ENCODE measurements at regions of chr15 and their contacts with region 1.

Region 1: DNA sequence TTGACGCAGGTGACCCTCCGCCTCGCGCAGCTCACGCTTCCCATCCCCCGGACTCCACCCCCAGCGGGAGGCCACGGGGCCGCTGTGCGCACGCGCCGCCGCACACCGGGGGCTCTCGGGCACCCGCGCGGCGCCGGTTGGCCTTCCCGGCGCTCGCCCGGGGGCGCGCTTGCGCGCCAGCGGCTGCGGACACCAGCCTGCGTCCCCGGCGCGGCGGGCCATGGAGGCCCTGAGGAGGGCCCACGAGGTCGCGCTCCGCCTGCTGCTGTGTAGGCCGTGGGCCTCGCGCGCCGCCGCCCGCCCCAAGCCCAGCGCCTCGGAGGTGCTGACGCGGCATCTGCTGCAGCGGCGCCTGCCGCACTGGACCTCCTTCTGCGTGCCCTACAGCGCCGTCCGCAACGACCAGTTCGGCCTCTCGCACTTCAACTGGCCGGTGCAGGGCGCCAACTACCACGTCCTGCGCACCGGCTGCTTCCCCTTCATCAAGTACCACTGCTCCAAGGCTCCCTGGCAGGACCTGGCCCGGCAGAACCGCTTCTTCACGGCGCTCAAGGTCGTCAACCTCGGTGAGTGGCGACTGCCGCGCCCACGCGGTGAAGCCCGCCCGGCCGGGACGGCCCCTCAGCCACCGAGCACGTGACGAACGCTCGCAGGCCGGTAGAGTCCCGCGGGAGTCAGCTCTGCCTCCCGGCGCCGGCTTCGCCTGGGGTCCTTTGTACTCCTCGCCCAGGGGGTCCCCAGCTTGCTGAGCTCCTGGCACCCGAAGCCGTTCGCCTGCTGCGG is at the start of gene C15orf61:
- DNase-seq: peak; percentile 91
- ATAC-seq: peak; percentile 83
- H3K4me3 ChIP-seq: peak within 1 kb of the TSS; percentile 71 to 86 (median 83)
- H3K4me3 Mint-ChIP-seq: peak within 1 kb of the TSS; percentile 95
- H3K27ac ChIP-seq: peak within 1 kb of the TSS; percentile 80 to 97
- H3K27ac Mint-ChIP-seq: peak within 1 kb of the TSS; percentile 95
- H3K4me1 ChIP-seq: peaks cover 11 to 18% of the 10 kb centered on the region in 2 donors
- H3K4me1 Mint-ChIP-seq: peaks cover 23% of the 10 kb centered on the region
- H3K27me3 ChIP-seq: no peaks in the 10 kb centered on the region
- H3K27me3 Mint-ChIP-seq: no peaks in the 10 kb centered on the region
- CTCF ChIP-seq: no peak
- total RNA-seq, gene C15orf61: 5.2 and 6.1 TPM in 2 replicates

Region 2: DNA sequence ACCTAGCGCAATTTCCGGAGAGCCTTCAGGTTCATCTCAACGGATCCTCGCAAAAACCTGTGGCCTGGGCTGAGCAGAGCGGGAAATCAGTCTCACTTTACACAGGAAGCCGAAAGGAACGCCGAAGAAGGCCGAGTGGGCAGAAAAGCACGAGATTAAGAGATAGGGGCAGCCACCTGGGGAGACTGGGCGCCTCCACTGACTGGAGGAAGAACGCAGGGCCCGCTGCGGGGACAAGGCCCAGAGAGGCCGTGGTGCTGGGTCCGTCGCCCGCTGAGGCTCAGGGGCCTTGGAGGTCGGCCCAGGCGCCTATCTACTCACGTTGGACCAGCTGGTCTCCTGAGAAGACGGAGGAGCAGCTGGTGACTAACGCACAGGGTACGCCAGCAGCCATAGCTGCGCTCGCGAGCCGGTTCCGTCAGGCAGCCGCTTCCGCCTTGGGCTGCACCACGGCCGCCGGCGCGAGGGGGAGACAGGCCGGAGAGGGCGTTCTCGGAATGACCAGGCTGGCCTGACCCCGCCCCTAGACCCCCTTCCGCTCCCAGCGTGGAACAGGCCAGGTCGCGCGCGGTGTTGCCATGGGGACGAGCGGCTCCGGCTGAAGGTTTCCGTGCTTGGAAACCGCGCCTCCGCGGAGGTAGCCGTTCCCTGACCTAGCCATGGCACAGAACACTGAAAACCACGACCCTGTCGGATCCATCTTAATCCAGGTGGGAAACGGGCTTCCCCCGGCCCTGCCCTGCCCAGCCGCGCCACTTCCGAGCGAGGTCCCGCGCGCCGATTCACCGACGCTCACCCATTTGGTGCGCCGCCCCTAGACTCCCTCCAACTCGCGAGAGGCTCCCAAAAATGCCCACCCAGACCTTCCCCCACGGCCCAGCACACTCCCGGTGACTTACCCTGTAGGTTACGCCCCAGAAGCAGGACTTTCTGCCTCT is 266.7 kb before region 1 on chr15 and contains the starts of genes AAGAB and IQCH:
- CTCF ChIA-PET with region 1: no interaction called
- POLR2A ChIA-PET with region 1: no interaction called
- intact Hi-C with region 1: loop called (anchors 1 kb)
- DNase-seq: peak; percentile 97
- ATAC-seq: peak; percentile 97
- H3K4me3 ChIP-seq: peak within 1 kb of the TSS; percentile 81 to 97 (median 92)
- H3K4me3 Mint-ChIP-seq: peak within 1 kb of the TSS; percentile 97
- H3K27ac ChIP-seq: peak within 1 kb of the TSS; percentile 72 to 84
- H3K27ac Mint-ChIP-seq: peak within 1 kb of the TSS; percentile 94
- H3K4me1 ChIP-seq: peaks cover 18 to 19% of the 10 kb centered on the region in 2 donors
- H3K4me1 Mint-ChIP-seq: peaks cover 30% of the 10 kb centered on the region
- H3K27me3 ChIP-seq: peaks cover 0 to 4% (median 0%) of the 10 kb centered on the region in 4 experiments
- H3K27me3 Mint-ChIP-seq: no peaks in the 10 kb centered on the region
- CTCF ChIP-seq: no peak
- total RNA-seq, gene AAGAB: 25.0 and 28.3 TPM in 2 replicates
- total RNA-seq, gene IQCH: 1.6 and 2.2 TPM in 2 replicates

Region 3: DNA sequence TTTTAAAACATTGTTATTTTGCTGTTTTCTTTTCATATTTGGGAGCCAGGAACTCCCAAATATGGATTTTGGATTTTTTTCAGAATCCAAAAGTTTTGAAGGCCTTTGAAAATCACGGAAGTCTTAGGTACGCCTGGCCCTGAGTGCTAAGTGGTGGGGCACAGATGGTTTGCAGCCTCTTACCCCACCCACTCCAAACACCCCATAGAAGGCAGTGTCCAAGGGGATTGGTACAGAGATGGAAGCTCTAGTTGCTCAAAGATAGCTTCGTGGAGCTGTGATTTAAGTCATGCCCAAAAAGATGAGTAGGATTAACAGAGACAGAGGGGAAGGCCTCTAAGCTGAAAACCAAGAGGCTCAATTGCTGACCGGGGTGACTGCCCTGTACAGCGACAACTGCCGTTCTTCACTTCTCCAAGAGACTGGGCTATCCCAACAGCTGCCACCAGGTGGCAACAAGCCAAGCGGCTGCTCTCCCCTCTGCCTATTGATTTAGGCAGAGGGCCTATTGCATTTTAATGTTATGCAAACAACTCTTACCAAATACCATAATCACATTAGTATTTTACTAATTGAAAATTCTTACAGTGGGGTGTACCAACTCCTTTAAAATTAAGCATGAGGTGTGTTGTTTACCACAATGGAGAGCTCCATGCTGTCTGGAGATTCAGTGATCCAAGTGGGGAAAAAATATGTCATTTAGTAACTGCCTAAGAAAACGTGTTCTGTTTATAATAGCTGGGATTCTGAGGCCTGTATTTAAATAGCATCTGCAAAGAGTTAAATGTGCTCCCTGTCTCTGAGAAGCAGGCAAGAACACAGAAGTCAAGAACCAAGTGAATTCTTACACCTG is 64.3 kb before region 1 on chr15:
- CTCF ChIA-PET with region 1: no interaction called
- POLR2A ChIA-PET with region 1: no interaction called
- intact Hi-C with region 1: loop called (anchors 10 kb)
- DNase-seq: peak; percentile 83
- ATAC-seq: peak; percentile 99
- H3K4me3 ChIP-seq: no peak overlapping the region
- H3K4me3 Mint-ChIP-seq: no peak overlapping the region
- H3K27ac ChIP-seq: no peak overlapping the region
- H3K27ac Mint-ChIP-seq: no peak overlapping the region
- H3K4me1 ChIP-seq: peaks cover 0 to 3% of the 10 kb centered on the region in 2 donors
- H3K4me1 Mint-ChIP-seq: peaks cover 2% of the 10 kb centered on the region
- H3K27me3 ChIP-seq: peaks cover 0 to 3% (median 1%) of the 10 kb centered on the region in 4 experiments
- H3K27me3 Mint-ChIP-seq: peaks cover 7% of the 10 kb centered on the region
- CTCF ChIP-seq: peak; percentile 97

Region 4: DNA sequence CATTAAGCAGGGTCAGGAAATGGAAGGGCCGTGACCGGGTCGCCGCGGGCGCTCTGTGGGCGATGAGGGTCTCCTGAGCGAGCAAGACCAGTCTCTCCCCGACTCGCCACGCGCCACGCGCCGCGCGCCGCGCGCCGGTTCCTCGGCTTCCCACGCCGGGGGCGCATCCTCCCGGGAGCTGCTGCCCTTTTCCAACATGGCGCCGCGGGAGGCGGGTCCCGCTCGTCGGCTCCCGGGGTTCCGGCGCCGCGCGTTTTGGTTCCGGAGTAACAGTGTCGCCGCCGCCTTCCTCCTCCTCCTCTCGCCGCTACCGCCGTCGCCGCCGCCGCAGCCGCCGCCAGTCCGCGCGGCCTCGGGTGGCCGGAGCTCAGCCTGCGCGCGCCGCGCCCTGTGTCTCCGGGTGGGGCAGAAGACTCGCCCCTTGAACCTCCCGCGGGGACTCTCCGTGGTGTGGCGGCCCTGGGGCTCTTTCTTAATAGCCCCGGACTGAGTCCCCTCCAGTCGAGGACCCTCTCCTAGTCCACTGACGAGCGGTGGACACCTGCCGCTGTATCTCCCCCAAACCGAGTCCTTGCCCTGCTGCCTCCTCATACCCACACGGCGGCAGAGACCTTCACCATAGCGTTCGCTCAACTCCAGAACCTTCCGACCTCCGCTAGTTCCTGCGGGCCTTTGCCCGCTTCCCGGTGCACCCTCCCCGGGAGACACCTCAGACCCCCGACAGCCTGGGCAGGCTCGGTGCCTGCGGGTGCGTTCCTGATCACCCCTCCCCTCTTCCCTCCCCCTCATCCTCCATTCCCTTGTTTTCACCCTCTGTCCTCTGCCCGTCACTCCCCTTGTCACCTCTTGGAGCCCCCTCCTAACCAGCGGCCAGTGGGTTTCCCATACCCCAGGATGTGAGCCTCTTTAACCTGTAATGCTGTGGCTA is 21.5 kb after region 1 on chr15 and contains the start of gene MAP2K5:
- CTCF ChIA-PET with region 1: interaction called, 4 read pairs
- POLR2A ChIA-PET with region 1: interaction called, 21 read pairs
- intact Hi-C with region 1: loop called (anchors 1 kb)
- DNase-seq: peak; percentile 85
- ATAC-seq: peak; percentile 80
- H3K4me3 ChIP-seq: peak within 1 kb of the TSS; percentile 78 to 99 (median 83)
- H3K4me3 Mint-ChIP-seq: peak within 1 kb of the TSS; percentile 91
- H3K27ac ChIP-seq: peak within 1 kb of the TSS; percentile 79 to 83
- H3K27ac Mint-ChIP-seq: peak within 1 kb of the TSS; percentile 93
- H3K4me1 ChIP-seq: peaks cover 25 to 28% of the 10 kb centered on the region in 2 donors
- H3K4me1 Mint-ChIP-seq: peaks cover 51% of the 10 kb centered on the region
- H3K27me3 ChIP-seq: peaks cover 0 to 6% (median 3%) of the 10 kb centered on the region in 4 experiments
- H3K27me3 Mint-ChIP-seq: peaks cover 5% of the 10 kb centered on the region
- CTCF ChIP-seq: no peak
- total RNA-seq, gene MAP2K5: 40.0 and 47.1 TPM in 2 replicates

Region 5: GRCh38 chr15:67746022-67746421 is 224.8 kb after region 1 on chr15:
- CTCF ChIA-PET with region 1: no interaction called
- POLR2A ChIA-PET with region 1: no interaction called
- intact Hi-C with region 1: no loop called
- DNase-seq: no peak
- ATAC-seq: no peak
- H3K4me3 ChIP-seq: no peak overlapping the region
- H3K4me3 Mint-ChIP-seq: no peak overlapping the region
- H3K27ac ChIP-seq: no peak overlapping the region
- H3K27ac Mint-ChIP-seq: no peak overlapping the region
- H3K4me1 ChIP-seq: peaks cover 0 to 6% of the 10 kb centered on the region in 2 donors
- H3K4me1 Mint-ChIP-seq: peaks cover 10% of the 10 kb centered on the region
- H3K27me3 ChIP-seq: no peaks in the 10 kb centered on the region
- H3K27me3 Mint-ChIP-seq: no peaks in the 10 kb centered on the region
- CTCF ChIP-seq: no peak

Region 6: GRCh38 chr15:67827561-67828277 is 306.5 kb after region 1 on chr15:
- CTCF ChIA-PET with region 1: no interaction called
- POLR2A ChIA-PET with region 1: no interaction called
- intact Hi-C with region 1: no loop called
- DNase-seq: peak; percentile 51
- ATAC-seq: no peak
- H3K4me3 ChIP-seq: no peak overlapping the region
- H3K4me3 Mint-ChIP-seq: no peak overlapping the region
- H3K27ac ChIP-seq: no peak overlapping the region
- H3K27ac Mint-ChIP-seq: no peak overlapping the region
- H3K4me1 ChIP-seq: peaks cover 55 to 74% of the 10 kb centered on the region in 2 donors
- H3K4me1 Mint-ChIP-seq: peaks cover 52% of the 10 kb centered on the region
- H3K27me3 ChIP-seq: peaks cover 4 to 89% (median 68%) of the 10 kb centered on the region in 4 experiments
- H3K27me3 Mint-ChIP-seq: peaks cover 62% of the 10 kb centered on the region
- CTCF ChIP-seq: no peak

Region 7: DNA sequence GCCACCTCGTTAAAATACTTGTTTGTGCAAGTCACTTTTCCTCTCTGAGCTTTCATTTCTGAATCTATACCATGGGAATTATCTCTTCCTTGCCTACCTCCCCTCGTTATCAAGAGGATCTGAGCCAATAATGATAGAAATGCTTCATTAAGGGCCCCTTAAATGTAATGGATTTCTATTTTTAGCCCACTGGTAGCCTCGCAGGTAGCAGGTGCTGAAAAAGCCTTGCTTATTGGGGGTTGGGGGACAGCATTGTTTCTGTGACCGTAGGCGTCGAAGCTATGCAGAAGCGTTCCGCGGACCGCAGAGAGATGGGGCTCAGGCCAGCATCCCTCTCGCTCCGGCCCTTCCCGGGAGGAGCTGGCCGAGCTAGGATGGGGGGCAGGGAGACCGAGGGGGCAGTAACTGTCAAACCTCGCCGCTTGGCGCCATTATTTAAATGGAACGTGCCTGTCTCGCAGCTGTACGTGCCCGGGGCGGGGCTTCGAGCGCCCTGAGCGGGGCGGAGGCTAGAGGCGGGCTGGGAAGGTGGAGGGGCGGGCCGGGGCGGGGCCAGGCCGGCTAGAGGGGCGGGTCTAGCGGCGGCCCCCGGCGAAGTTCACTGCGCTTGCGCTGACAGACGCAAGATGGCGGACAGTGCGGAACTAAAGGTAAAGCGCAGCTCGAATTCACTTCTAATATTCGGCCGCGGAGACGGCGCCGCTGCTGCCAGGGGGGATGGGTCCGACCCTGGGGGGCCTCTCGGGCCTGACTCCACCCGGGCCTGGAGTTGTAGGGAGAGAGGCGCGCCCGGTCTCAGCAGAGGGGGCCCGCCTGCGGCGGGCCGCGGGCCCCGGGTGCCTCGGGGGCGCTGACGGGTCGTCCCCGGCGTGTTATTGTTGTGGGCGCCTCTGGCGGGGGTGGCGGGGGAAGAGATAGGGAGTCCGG is 532.7 kb after region 1 on chr15 and contains the start of gene PIAS1:
- CTCF ChIA-PET with region 1: no interaction called
- POLR2A ChIA-PET with region 1: no interaction called
- intact Hi-C with region 1: loop called (anchors 1 kb)
- DNase-seq: peak; percentile 95
- ATAC-seq: peak; percentile 92
- H3K4me3 ChIP-seq: peak within 1 kb of the TSS; percentile 77 to 99 (median 88)
- H3K4me3 Mint-ChIP-seq: peak within 1 kb of the TSS; percentile 93
- H3K27ac ChIP-seq: peak within 1 kb of the TSS; percentile 78 to 92
- H3K27ac Mint-ChIP-seq: peak within 1 kb of the TSS; percentile 96
- H3K4me1 ChIP-seq: peaks cover 11 to 26% of the 10 kb centered on the region in 2 donors
- H3K4me1 Mint-ChIP-seq: peaks cover 40% of the 10 kb centered on the region
- H3K27me3 ChIP-seq: no peaks in the 10 kb centered on the region
- H3K27me3 Mint-ChIP-seq: no peaks in the 10 kb centered on the region
- CTCF ChIP-seq: no peak
- total RNA-seq, gene PIAS1: 87.3 and 97.5 TPM in 2 replicates

Measured in B cell (primary cell).